Colonic mucosa (tissue), 4 donors: ENCODE measurements at regions of chr14 and their contacts with region 1.

Region 1: DNA sequence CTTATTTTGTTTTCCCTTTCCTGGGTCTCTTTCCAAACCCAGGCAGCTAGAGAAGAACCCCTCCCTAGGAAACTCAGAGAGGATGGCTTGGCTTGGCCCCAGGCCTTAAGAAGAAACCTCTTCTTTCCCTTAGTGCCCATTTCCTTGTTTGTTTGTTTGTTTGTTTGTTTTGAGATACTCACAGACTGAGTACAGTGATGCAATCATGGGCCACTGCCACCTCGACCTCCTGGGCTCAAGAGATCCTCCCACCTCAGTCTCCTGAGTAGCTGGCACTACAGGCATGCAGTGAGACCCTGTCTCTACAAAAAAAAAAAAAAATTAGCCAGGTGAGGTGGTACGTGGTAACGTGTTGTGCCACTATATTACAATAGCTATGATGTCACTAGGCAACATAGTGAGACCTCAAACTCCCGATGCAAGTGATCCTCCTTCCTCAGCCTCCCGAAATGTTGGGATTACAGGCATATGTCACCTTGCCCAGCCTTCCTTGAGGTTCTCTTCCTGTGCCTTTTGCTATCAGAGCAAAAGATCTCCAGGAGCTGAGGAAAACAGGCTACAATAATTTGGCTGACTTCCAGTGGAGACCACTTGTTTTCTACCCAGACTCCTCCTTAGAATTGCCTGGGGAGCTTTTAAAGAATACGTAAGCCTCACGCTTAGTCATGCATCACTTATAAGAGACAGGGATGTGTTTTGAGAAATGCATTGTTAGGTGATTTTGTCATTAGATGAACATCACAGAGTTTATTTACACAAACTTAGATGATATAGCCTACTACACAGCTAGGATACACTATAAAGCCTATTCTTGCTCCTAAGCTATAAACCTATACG is 34.5 kb upstream of the LGALS3 start:
- DNase-seq: no peak
- H3K4me3 ChIP-seq: no peak overlapping the region
- H3K27ac ChIP-seq: no peak overlapping the region
- H3K4me1 ChIP-seq: peaks cover 8% of the 10 kb centered on the region
- H3K27me3 ChIP-seq: no peaks in the 10 kb centered on the region
- CTCF ChIP-seq: no peak

Region 2: DNA sequence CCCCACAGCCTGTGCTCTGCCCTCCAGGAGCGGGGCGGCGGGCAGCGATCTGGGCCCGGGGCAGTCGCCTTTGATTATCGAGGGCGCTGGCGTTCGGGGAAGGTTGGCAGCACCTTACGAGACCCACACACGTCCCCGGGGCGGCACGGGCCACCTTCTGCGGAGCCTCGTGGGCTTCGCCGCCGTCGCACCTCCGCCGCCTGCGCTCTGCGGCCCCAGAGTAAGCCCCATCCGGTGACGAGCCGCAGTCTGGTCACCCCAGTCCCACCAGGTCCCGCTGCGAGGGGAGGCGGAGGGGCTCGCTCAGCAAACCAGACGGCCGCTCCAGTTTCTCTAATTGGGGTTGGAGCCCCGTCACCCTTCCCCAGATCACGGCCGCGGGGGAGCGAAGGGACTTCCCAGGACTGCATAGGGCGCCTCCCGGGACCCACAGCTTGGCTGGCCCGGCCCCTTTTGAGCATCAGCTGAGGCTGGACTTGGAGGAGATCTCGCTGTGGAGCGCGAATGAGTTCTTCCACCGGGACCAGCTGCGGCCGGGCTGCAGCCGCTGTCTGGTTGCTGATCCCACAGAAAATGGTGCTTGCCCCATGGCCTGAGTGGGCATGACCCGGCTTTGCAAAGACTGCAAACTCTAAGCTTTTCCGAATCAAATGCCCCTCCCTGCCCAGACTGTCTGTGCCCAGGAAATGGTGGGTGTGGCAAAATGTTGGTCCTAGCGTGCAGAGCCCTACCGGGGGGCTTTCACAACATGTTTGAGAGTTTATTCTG is 35.1 kb after region 1 on chr14:
- intact Hi-C with region 1: loop called (anchors 5 kb)
- DNase-seq: peak; percentile 67
- H3K4me3 ChIP-seq: peak overlapping the region; percentile 60
- H3K27ac ChIP-seq: peak overlapping the region; percentile 95
- H3K4me1 ChIP-seq: peaks cover 23% of the 10 kb centered on the region
- H3K27me3 ChIP-seq: no peaks in the 10 kb centered on the region
- CTCF ChIP-seq: no peak

Region 3: GRCh38 chr14:55221186-55221585 is 126.6 kb after region 1 on chr14:
- intact Hi-C with region 1: no loop called
- DNase-seq: no peak
- H3K4me3 ChIP-seq: no peak overlapping the region
- H3K27ac ChIP-seq: no peak overlapping the region
- H3K4me1 ChIP-seq: no peaks in the 10 kb centered on the region
- H3K27me3 ChIP-seq: no peaks in the 10 kb centered on the region
- CTCF ChIP-seq: no peak